A549 (cell line): ENCODE measurements at regions of chr1 and their contacts with region 1.

Region 1: GRCh38 chr1:233480198-233480597 is 133.7 kb upstream of the KCNK1 start:
- DNase-seq: no peak
- ATAC-seq: no peak
- H3K4me3 ChIP-seq: no peak overlapping the region
- H3K27ac ChIP-seq: no peak overlapping the region
- H3K4me1 ChIP-seq: 0 out of 3 replicates have a peak, but pooled peaks cover 8% of the 10 kb centered on the region
- CTCF ChIP-seq: no peak
- EP300 ChIP-seq: no peak
- POLR2A ChIP-seq: no peak
- RAD21 ChIP-seq: no peak

Region 2: DNA sequence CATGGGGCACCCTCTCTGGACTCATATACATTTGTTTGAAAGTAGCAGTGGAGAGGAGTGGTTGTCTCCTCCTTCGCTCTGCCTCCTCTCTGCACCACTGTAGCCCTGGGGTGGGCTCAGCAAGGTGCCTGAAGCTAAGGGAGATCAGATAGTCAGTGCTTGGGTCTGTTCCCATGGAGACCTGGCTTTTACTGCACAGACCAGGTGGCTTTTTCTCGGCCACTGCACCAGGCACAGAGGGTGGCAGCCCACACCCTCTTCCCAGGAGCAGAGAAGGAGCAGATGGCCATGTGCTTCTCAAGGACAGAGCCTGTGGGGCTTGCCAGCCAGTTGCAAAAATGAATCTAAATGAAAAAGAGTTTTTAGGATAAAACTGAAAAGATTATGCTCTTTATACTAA is 10.3 kb after region 1 on chr1:
- CTCF ChIA-PET with region 1: interaction called, 11 read pairs
- POLR2A ChIA-PET with region 1: no interaction called
- DNase-seq: no peak
- ATAC-seq: no peak
- H3K4me3 ChIP-seq: no peak overlapping the region
- H3K27ac ChIP-seq: no peak overlapping the region
- H3K4me1 ChIP-seq: no peaks in the 10 kb centered on the region
- CTCF ChIP-seq: no peak
- EP300 ChIP-seq: no peak
- POLR2A ChIP-seq: no peak
- RAD21 ChIP-seq: no peak

Region 3: DNA sequence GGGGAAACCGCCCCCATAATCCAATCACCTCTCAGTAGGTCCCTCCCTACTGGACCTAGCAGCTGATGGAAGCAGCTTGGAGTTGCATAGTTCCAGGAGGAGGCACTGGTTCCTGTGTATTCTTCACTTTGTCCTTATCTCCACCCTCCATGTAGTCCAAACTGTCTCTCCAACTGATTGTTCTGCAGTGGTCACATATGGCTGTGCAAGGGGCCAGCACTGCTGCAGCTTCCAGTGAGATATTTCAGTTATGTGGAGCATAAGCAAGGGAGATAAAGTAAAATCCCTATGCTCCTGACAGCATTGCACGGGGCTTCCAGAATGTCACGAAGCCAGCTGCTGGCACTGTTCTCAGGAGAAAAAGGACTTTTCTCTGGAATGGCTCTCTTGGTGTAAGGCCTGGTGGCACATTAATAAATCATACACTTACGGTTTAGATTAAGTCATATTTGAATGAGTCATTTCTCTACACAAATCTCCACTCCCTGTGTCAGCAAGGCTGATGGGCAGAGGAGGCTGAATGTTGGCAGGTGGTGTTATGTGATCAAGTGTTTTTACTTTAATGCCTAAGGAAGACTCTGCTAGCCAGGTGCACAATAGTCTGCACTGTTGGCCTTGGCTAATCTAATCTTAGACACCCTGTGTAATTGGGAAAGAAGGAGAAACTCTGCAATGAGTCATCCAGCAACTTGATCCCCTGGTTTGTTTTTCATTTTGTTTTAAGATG is 227.1 kb after region 1 on chr1:
- CTCF ChIA-PET with region 1: no interaction called
- POLR2A ChIA-PET with region 1: no interaction called
- DNase-seq: peak; percentile 54 to 69
- ATAC-seq: peak; percentile 90 to 92
- H3K4me3 ChIP-seq: no peak overlapping the region
- H3K27ac ChIP-seq: peak overlapping the region; percentile 58 to 77
- H3K4me1 ChIP-seq: peaks cover 36% of the 10 kb centered on the region
- CTCF ChIP-seq: no peak
- EP300 ChIP-seq: no peak
- POLR2A ChIP-seq: no peak
- RAD21 ChIP-seq: no peak